GM10248 (cell line): ENCODE measurements at regions of chr1 and their contacts with region 1.

Region 1: DNA sequence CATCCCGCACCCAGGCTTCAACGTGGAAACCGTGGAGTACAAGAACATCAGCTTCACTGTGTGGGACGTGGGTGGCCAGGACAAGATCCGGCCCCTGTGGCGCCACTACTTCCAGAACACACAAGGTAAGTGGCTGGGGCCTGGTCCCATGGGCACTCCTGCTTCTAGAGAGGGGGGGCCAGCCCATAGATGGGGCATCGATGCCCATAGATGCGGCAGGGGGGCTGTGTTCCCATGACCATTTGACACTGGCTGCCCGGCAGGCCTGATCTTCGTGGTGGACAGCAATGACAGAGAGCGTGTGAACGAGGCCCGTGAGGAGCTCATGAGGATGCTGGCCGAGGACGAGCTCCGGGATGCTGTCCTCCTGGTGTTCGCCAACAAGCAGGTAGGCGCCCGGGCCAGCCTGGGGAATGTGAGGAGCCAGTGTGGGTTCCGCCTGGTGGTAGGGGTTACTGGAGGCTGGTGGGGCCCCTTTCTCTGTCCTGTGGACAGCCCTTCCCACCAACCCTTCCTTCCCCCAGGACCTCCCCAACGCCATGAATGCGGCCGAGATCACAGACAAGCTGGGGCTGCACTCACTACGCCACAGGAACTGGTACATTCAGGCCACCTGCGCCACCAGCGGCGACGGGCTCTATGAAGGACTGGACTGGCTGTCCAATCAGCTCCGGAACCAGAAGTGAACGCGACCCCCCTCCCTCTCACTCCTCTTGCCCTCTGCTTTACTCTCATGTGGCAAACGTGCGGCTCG is 5.6 kb downstream of the C1orf35 start:
- DNase-seq: peak; percentile 12
- CTCF ChIP-seq: no peak

Region 2: GRCh38 chr1:226903819-226904716 is 1193.4 kb before region 1 on chr1:
- CTCF ChIA-PET with region 1: no interaction called
- POLR2A ChIA-PET with region 1: no interaction called
- DNase-seq: no peak
- CTCF ChIP-seq: no peak

Region 3: DNA sequence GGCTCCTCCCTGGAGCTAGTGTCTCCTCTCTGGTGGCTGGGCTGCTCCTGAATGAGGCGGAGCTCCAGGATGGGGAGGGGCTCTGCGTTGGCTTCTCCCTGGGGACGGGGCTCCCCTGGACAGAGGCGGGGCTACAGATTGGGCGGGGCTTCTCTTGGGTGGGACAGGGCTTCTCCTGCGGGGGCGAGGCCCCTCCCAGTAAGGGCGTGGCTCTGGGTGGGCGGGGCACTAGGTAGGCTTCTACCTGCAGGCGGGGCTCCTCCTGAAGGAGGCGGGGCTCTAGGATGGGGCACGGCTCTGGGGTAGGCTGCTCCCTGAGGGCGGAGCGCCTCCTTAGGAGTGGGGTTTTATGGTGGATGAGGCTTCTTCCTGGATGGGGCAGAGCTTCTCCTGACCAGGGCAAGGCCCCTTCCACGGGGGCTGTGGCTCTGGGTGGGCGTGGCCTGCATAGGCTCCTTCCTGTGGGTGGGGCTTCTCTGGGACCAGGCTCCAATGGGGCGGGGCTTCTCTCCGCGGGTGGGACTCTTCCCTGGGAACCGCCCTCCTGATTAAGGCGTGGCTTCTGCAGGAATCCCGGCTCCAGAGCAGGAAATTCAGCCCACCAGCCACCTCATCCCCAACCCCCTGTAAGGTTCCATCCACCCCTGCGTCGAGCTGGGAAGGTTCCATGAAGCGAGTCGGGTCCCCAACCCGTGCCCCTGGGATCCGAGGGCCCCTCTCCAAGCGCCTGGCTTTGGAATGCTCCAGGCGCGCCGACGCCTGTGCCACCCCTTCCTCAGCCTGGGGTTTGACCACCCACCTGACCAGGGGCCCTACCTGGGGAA is 37.7 kb before region 1 on chr1:
- CTCF ChIA-PET with region 1: no interaction called
- POLR2A ChIA-PET with region 1: no interaction called
- DNase-seq: no peak
- CTCF ChIP-seq: no peak

Region 4: GRCh38 chr1:228071839-228072657 is 25.5 kb before region 1 on chr1:
- CTCF ChIA-PET with region 1: no interaction called
- POLR2A ChIA-PET with region 1: no interaction called
- DNase-seq: no peak
- CTCF ChIP-seq: no peak

Region 5: GRCh38 chr1:228083332-228084278 is 13.9 kb before region 1 on chr1:
- CTCF ChIA-PET with region 1: interaction called, 10 read pairs
- POLR2A ChIA-PET with region 1: interaction called, 5 read pairs
- DNase-seq: no peak
- CTCF ChIP-seq: no peak

Region 6: GRCh38 chr1:228117335-228117734 is 19.8 kb after region 1 on chr1:
- CTCF ChIA-PET with region 1: no interaction called
- POLR2A ChIA-PET with region 1: no interaction called
- DNase-seq: no peak
- CTCF ChIP-seq: no peak